Dorsolateral prefrontal cortex (tissue), 120 donors: ENCODE measurements at regions of chr4 and their contacts with region 1.

Region 1: DNA sequence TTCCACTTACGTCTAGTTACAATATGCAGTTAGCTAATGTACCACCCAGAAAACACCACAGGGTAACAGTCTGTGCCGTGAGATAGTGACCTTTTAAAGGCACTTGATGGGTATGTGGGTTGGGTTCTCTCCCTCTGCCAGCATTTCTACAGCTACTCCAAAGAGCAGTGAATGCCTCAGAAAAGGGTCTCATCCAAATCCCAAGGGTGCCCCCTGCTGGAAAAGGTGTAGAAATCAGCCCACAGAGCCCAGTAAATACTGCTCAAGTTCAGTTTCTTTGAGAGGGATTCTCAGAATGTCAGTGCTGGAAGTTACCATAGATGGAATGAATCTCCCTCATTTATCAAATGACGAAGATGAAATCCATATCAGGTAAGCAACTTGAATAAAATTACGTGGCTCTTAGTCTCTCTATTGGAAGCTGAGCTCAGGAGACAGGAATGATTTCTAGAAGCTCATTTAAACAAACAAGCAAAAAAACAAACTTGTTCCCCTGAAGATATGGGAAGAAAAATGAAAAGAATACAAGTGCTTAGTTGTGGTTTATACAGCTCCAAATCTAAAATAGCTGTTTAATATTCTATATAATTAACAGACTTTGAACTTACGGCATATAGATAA is 9.5 kb downstream of the RNF175 start:
- DNase-seq: peak in 7 of 10 donors; percentile 21 to 70 (median 49)
- H3K4me3 ChIP-seq: no peak overlapping the region
- H3K27ac ChIP-seq: no peak overlapping the region
- H3K27me3 ChIP-seq: no peaks in the 10 kb centered on the region
- CTCF ChIP-seq: peak; percentile 28 to 83 (median 70)

Region 2: DNA sequence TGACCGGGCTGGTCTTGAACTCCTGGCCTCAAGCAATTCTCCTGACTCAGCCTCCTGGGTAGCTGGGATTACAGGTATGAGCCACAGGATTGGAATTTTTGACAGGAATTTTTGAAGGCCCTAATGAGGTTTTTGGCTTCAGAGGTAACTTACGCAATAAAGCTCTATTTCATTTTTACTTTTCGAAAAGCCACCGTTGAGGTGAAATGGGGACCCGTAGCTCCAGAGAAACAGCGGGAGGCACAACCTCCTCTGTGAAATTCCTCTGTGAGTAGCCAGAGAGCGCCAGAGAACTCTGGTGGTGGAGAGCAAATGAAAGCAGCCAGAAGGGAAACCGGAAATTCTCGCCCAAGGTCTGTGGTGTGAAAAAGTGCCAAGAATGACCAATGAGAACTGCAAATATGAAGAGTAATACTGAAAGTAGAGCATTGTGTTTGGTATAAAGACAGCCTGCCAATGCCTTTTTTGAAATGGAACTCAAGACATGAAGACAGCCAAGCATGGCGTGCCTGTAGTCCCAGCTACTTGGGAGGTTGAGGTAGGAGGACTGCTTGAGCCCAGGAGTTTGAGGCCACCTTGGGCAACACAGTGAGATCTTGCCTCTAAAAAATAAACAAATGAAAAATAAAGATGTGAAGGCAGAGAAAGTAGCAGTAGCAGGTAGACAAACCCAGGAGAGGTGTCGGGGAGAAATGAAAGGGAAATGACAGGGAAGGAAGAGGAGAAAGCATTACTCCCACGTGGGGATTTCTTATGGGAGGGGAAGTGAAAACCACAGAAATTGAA is 317.1 kb before region 1 on chr4:
- intact Hi-C with region 1: loop called in 1 of 2 experiments (anchors 10 kb)
- DNase-seq: no peak
- H3K4me3 ChIP-seq: peak overlapping the region in 1 of 59 donors; percentile 15
- H3K27ac ChIP-seq: peak overlapping the region in 3 of 59 donors; percentile 48 to 54 (median 53)
- H3K27me3 ChIP-seq: no peaks in the 10 kb centered on the region
- CTCF ChIP-seq: peak in 50 of 56 donors; percentile 2 to 67 (median 44)

Region 3: GRCh38 chr4:153634738-153635353 is 115.5 kb before region 1 on chr4:
- intact Hi-C with region 1: loop called in 1 of 2 experiments (anchors 10 kb)
- DNase-seq: no peak
- H3K4me3 ChIP-seq: no peak overlapping the region
- H3K27ac ChIP-seq: peak overlapping the region in 1 of 59 donors; percentile 32
- H3K27me3 ChIP-seq: no peaks in the 10 kb centered on the region
- CTCF ChIP-seq: peak in 55 of 56 donors; percentile 32 to 74 (median 60)

Region 4: DNA sequence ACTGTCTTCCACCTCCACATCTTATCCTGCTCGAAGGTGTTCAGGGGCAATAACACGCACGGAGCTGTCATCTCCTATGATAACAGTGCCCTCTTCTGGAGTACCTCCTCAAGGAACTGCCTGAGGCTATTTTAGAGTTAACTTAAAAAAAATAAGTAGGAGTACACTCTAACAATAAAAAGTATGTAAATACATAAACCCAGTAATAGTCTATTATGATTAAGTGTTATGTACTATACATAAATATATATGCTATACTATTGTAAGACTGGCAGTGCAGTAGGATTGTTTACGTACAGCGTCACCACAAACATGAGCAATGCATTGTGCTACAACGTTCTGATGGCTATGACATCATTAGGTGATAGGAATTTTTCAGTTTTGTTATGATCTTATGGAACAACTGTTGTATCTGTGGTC is 100.7 kb before region 1 on chr4:
- intact Hi-C with region 1: no loop called
- DNase-seq: no peak
- H3K4me3 ChIP-seq: no peak overlapping the region
- H3K27ac ChIP-seq: no peak overlapping the region
- H3K27me3 ChIP-seq: no peaks in the 10 kb centered on the region
- CTCF ChIP-seq: peak in 38 of 56 donors; percentile 7 to 56 (median 30)

Region 5: DNA sequence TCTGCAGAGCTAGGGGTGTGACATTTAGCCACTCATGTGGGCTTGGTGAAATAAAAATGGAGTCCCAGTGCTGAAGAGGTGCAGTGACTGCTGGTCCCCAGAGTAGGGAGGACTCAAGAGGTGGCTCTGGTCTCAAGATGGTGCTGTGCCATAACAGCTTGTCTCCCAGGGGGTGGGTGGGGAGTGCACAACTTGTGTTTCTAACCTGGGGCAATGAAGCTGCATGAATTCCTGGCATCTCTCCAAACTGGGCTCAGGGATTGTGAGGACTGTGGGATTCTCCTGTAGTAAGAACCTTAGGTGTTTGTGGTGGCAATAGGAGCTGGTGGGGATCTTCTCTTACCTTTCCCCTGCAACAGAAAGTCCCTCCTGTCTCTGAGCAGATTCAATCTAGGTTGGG is 317.5 kb after region 1 on chr4:
- intact Hi-C with region 1: no loop called
- DNase-seq: no peak
- H3K4me3 ChIP-seq: no peak overlapping the region
- H3K27ac ChIP-seq: no peak overlapping the region
- H3K27me3 ChIP-seq: no peaks in the 10 kb centered on the region
- CTCF ChIP-seq: no peak